HCT116 (cell line): ENCODE measurements at regions of chr17 and their contacts with region 1.

Region 1: DNA sequence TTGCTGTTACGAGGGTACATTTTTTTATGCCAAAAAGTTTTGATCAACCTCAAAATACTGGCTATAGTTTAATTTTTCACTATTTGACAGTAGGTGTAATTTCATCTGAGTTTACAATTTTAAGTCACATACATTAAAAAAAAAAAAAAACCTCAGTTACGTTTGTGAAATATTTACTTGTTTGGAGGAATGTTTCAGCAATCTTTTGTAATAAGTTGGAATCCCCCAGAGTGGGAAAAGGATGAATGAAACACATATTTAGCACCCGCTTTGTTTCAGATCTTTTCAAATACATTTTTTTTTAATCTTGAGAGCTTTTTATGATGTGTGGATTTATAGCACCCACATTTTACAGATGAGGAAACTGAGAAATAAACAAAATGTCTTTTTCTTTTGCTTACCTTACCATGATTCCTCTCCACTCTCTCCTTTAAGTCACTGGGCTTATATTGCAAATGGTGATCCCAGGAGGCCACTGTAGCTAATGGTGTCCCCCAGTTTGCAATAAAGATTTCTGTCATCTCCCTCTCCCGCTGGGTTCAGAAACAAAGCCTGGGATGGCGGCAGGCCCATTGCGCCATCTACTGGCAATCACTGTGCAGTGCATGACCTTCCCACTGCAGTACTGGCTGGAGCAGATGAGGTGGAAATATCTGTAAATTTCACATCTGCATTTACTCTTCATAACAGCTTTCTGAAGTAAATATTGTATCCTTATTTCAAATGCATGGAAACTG is 27.7 kb downstream of the TBC1D3B start:
- DNase-seq: peak; percentile 68
- ATAC-seq: peak; percentile 98
- H3K4me3 ChIP-seq: no peak overlapping the region
- H3K27ac ChIP-seq: no peak overlapping the region
- H3K4me1 ChIP-seq: peaks cover 0 to 6% of the 10 kb centered on the region in 2 experiments; a peak in 1 of 4 replicates
- H3K27me3 ChIP-seq: peaks cover 13% of the 10 kb centered on the region; the same call in 1 of the 2 replicates
- CTCF ChIP-seq: peak; percentile 98 to 100 (median 100)
- POLR2A ChIP-seq: no peak
- RAD21 ChIP-seq: peak; percentile 99

Region 2: GRCh38 chr17:35849469-35850348 is 299.0 kb before region 1 on chr17:
- CTCF ChIA-PET with region 1: interaction called, 6 read pairs
- POLR2A ChIA-PET with region 1: no interaction called
- RAD21 ChIA-PET with region 1: no interaction called
- intact Hi-C with region 1: loop called (anchors 10 kb)
- DNase-seq: peak; percentile 33
- ATAC-seq: peak; percentile 86
- H3K4me3 ChIP-seq: no peak overlapping the region
- H3K27ac ChIP-seq: no peak overlapping the region
- H3K4me1 ChIP-seq: no peaks in the 10 kb centered on the region
- H3K27me3 ChIP-seq: no peaks in the 10 kb centered on the region
- CTCF ChIP-seq: peak; percentile 41 to 91 (median 81); a peak in 5 of 6 replicates
- POLR2A ChIP-seq: no peak
- RAD21 ChIP-seq: peak; percentile 49

Region 3: GRCh38 chr17:35969558-35970380 is 179.0 kb before region 1 on chr17:
- CTCF ChIA-PET with region 1: interaction called, 137 read pairs
- POLR2A ChIA-PET with region 1: interaction called, 4 read pairs
- RAD21 ChIA-PET with region 1: interaction called, 7 to 22 read pairs
- intact Hi-C with region 1: loop called (anchors 1 kb)
- DNase-seq: peak; percentile 76
- ATAC-seq: peak; percentile 96
- H3K4me3 ChIP-seq: no peak overlapping the region
- H3K27ac ChIP-seq: no peak overlapping the region
- H3K4me1 ChIP-seq: no peaks in the 10 kb centered on the region
- H3K27me3 ChIP-seq: no peaks in the 10 kb centered on the region
- CTCF ChIP-seq: peak; percentile 66 to 87 (median 74); a peak in 5 of 6 replicates
- POLR2A ChIP-seq: no peak
- RAD21 ChIP-seq: peak; percentile 90

Region 4: GRCh38 chr17:36072431-36073121 is 76.2 kb before region 1 on chr17:
- CTCF ChIA-PET with region 1: interaction called, 16 read pairs
- POLR2A ChIA-PET with region 1: interaction called, 3 read pairs
- RAD21 ChIA-PET with region 1: interaction called in 1 of 2 experiments, 3 read pairs
- intact Hi-C with region 1: no loop called
- DNase-seq: peak; percentile 24
- ATAC-seq: peak; percentile 88
- H3K4me3 ChIP-seq: no peak overlapping the region
- H3K27ac ChIP-seq: no peak overlapping the region
- H3K4me1 ChIP-seq: no peaks in the 10 kb centered on the region
- H3K27me3 ChIP-seq: no peaks in the 10 kb centered on the region
- CTCF ChIP-seq: peak; percentile 25 to 91 (median 71); a peak in 4 of 6 replicates
- POLR2A ChIP-seq: no peak
- RAD21 ChIP-seq: peak; percentile 33; the same call in 1 of the 2 replicates

Region 5: GRCh38 chr17:36117505-36118382 is 31.0 kb before region 1 on chr17:
- CTCF ChIA-PET with region 1: interaction called, 10 read pairs
- POLR2A ChIA-PET with region 1: no interaction called
- RAD21 ChIA-PET with region 1: interaction called in 1 of 2 experiments, 4 read pairs
- intact Hi-C with region 1: no loop called
- DNase-seq: no peak
- ATAC-seq: no peak
- H3K4me3 ChIP-seq: no peak overlapping the region
- H3K27ac ChIP-seq: no peak overlapping the region
- H3K4me1 ChIP-seq: no peaks in the 10 kb centered on the region
- H3K27me3 ChIP-seq: no peaks in the 10 kb centered on the region; the same call in 1 of the 2 replicates
- CTCF ChIP-seq: no peak
- POLR2A ChIP-seq: no peak
- RAD21 ChIP-seq: no peak

Region 6: GRCh38 chr17:36133602-36134236 is 15.0 kb before region 1 on chr17:
- CTCF ChIA-PET with region 1: interaction called, 37 read pairs
- POLR2A ChIA-PET with region 1: no interaction called
- RAD21 ChIA-PET with region 1: interaction called in 1 of 2 experiments, 4 read pairs
- intact Hi-C with region 1: no loop called
- DNase-seq: no peak
- ATAC-seq: no peak
- H3K4me3 ChIP-seq: no peak overlapping the region
- H3K27ac ChIP-seq: no peak overlapping the region
- H3K4me1 ChIP-seq: no peaks in the 10 kb centered on the region
- H3K27me3 ChIP-seq: 0 out of 2 replicates have a peak, but pooled peaks cover 7% of the 10 kb centered on the region
- CTCF ChIP-seq: no peak
- POLR2A ChIP-seq: no peak
- RAD21 ChIP-seq: no peak

Region 7: GRCh38 chr17:36212966-36213365 is 64.2 kb after region 1 on chr17:
- CTCF ChIA-PET with region 1: no interaction called
- POLR2A ChIA-PET with region 1: no interaction called
- RAD21 ChIA-PET with region 1: no interaction called
- intact Hi-C with region 1: no loop called
- DNase-seq: no peak
- ATAC-seq: no peak
- H3K4me3 ChIP-seq: no peak overlapping the region
- H3K27ac ChIP-seq: no peak overlapping the region
- H3K4me1 ChIP-seq: no peaks in the 10 kb centered on the region
- H3K27me3 ChIP-seq: peaks cover 20% of the 10 kb centered on the region; the same call in 1 of the 2 replicates
- CTCF ChIP-seq: no peak
- POLR2A ChIP-seq: no peak
- RAD21 ChIP-seq: no peak